A673 (cell line): ENCODE measurements at regions of chr11 and their contacts with region 1.

Region 1: GRCh38 chr11:118488480-118489109 is 38.7 kb upstream of the TTC36 start:
- DNase-seq: peak; percentile 83
- H3K4me3 ChIP-seq: no peak overlapping the region
- H3K27ac ChIP-seq: no peak overlapping the region
- H3K4me1 ChIP-seq: no peaks in the 10 kb centered on the region
- H3K27me3 ChIP-seq: no peaks in the 10 kb centered on the region
- CTCF ChIP-seq: peak; percentile 97

Region 2: GRCh38 chr11:118152552-118153471 is 335.8 kb before region 1 on chr11 and contains the start of gene SCN4B:
- CTCF ChIA-PET with region 1: no interaction called
- POLR2A ChIA-PET with region 1: no interaction called
- intact Hi-C with region 1: loop called (anchors 5 kb)
- DNase-seq: peak; percentile 85
- H3K4me3 ChIP-seq: peak within 1 kb of the TSS; percentile 62
- H3K27ac ChIP-seq: no peak within 1 kb of the TSS
- H3K4me1 ChIP-seq: peaks cover 42% of the 10 kb centered on the region
- H3K27me3 ChIP-seq: peaks cover 43% of the 10 kb centered on the region
- CTCF ChIP-seq: no peak
- total RNA-seq, gene SCN4B: 0.74 and 1.8 TPM in 2 replicates

Region 3: DNA sequence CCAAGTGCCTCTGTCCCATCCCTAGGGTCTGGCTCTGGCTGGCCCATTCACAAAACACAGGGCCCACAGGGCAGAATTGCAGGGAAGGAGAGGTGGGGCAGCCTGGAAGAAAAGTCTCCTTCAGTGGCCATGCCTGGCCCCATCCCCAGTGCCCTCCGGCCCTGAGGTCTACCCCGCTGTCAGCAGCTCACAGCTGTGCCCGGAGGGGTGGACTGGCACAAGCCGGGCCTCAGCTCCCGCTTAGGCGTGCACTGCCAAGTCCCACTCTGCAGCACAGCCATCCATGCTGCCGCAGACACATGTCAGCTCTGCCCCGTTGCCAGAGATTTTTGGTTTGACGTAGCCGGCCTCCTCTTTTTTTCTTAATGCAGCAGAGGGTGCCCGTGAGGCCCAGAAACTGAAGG is 308.3 kb before region 1 on chr11:
- CTCF ChIA-PET with region 1: no interaction called
- POLR2A ChIA-PET with region 1: no interaction called
- intact Hi-C with region 1: no loop called
- DNase-seq: peak; percentile 59
- H3K4me3 ChIP-seq: no peak overlapping the region
- H3K27ac ChIP-seq: no peak overlapping the region
- H3K4me1 ChIP-seq: no peaks in the 10 kb centered on the region
- H3K27me3 ChIP-seq: peaks cover 1% of the 10 kb centered on the region
- CTCF ChIP-seq: no peak

Region 4: GRCh38 chr11:118198370-118198769 is 290.2 kb before region 1 on chr11:
- CTCF ChIA-PET with region 1: interaction called, 4 read pairs
- POLR2A ChIA-PET with region 1: no interaction called
- intact Hi-C with region 1: loop called (anchors 1 kb)
- DNase-seq: peak; percentile 68
- H3K4me3 ChIP-seq: no peak overlapping the region
- H3K27ac ChIP-seq: no peak overlapping the region
- H3K4me1 ChIP-seq: no peaks in the 10 kb centered on the region
- H3K27me3 ChIP-seq: no peaks in the 10 kb centered on the region
- CTCF ChIP-seq: peak; percentile 96

Region 5: DNA sequence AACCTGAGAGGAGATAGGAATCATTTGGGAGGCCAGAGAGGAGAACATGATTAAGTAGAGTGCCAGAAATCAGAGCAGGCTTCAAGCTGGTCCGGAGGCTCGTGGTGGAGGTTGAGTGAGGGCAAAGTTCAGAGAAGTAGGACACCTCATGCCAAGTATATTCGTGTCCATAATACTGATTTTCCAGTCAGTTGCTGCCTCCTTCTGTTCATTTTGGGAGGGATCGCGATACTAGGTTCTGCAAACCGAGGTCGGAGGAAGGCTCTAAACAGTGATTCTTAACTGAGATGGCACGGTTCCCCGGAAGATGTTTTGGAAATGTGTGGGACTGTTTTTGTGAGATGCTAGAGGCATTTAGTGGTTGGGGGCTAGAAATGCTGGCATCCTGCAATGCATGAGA is 197.7 kb before region 1 on chr11:
- CTCF ChIA-PET with region 1: no interaction called
- POLR2A ChIA-PET with region 1: no interaction called
- intact Hi-C with region 1: loop called (anchors 10 kb)
- DNase-seq: no peak
- H3K4me3 ChIP-seq: no peak overlapping the region
- H3K27ac ChIP-seq: no peak overlapping the region
- H3K4me1 ChIP-seq: no peaks in the 10 kb centered on the region
- H3K27me3 ChIP-seq: peaks cover 22% of the 10 kb centered on the region
- CTCF ChIP-seq: peak; percentile 34; the same call in 1 of the 2 replicates

Region 6: GRCh38 chr11:118374729-118375128 is 113.9 kb before region 1 on chr11:
- CTCF ChIA-PET with region 1: no interaction called
- POLR2A ChIA-PET with region 1: no interaction called
- intact Hi-C with region 1: loop called (anchors 5 kb)
- DNase-seq: no peak
- H3K4me3 ChIP-seq: no peak overlapping the region
- H3K27ac ChIP-seq: no peak overlapping the region
- H3K4me1 ChIP-seq: no peaks in the 10 kb centered on the region
- H3K27me3 ChIP-seq: no peaks in the 10 kb centered on the region
- CTCF ChIP-seq: no peak

Region 7: GRCh38 chr11:118401151-118401878 is 87.3 kb before region 1 on chr11 and contains the start of gene ATP5MG:
- CTCF ChIA-PET with region 1: no interaction called
- POLR2A ChIA-PET with region 1: no interaction called
- intact Hi-C with region 1: loop called (anchors 5 kb)
- DNase-seq: peak; percentile 97
- H3K4me3 ChIP-seq: peak within 1 kb of the TSS; percentile 78
- H3K27ac ChIP-seq: peak within 1 kb of the TSS; percentile 89
- H3K4me1 ChIP-seq: peaks cover 16% of the 10 kb centered on the region
- H3K27me3 ChIP-seq: no peaks in the 10 kb centered on the region
- CTCF ChIP-seq: 0 out of 2 replicates have a peak, but pooled peaks have one; percentile 16
- total RNA-seq, gene ATP5MG: 303 and 334 TPM in 2 replicates

Region 8: DNA sequence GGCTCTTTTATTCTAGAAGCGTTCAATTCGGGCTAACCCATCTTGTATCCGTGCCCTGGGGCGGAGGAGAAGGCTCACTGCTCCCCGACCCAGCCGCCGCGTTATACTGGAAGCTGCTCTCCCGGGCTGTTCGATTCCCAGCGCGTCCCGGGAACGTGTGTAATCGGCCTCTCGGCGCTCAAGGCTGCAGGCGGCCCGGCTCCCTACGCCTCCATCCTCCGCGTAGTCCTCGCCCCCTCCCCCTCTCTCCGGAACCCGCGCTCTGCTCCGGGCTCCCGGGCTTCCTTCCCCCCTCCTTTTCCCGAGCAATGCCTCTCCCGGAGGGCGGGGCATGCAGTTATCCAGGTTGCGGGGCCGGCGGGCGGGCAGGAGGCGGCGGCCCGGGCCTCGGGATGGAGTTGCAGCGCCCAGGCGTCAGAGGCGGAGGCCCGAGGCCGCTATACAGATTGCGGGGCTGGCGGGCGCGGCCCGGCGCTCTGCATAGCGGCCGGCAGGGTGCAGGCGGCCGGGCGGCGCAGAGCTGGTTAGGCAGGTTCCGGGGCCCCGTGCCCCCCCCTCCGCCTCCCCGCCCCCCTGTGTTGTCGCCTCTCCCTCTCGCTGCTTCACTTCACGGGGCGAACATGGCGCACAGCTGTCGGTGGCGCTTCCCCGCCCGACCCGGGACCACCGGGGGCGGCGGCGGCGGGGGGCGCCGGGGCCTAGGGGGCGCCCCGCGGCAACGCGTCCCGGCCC is 52.5 kb before region 1 on chr11 and contains the start of gene KMT2A:
- CTCF ChIA-PET with region 1: no interaction called
- POLR2A ChIA-PET with region 1: no interaction called
- intact Hi-C with region 1: loop called (anchors 5 kb)
- DNase-seq: peak; percentile 100
- H3K4me3 ChIP-seq: peak within 1 kb of the TSS; percentile 93
- H3K27ac ChIP-seq: peak within 1 kb of the TSS; percentile 87
- H3K4me1 ChIP-seq: peaks cover 38% of the 10 kb centered on the region
- H3K27me3 ChIP-seq: no peaks in the 10 kb centered on the region
- CTCF ChIP-seq: no peak
- total RNA-seq, gene KMT2A: 116 and 121 TPM in 2 replicates